SK-N-SH (cell line): ENCODE measurements at regions of chr9 and their contacts with region 1.

Region 1: DNA sequence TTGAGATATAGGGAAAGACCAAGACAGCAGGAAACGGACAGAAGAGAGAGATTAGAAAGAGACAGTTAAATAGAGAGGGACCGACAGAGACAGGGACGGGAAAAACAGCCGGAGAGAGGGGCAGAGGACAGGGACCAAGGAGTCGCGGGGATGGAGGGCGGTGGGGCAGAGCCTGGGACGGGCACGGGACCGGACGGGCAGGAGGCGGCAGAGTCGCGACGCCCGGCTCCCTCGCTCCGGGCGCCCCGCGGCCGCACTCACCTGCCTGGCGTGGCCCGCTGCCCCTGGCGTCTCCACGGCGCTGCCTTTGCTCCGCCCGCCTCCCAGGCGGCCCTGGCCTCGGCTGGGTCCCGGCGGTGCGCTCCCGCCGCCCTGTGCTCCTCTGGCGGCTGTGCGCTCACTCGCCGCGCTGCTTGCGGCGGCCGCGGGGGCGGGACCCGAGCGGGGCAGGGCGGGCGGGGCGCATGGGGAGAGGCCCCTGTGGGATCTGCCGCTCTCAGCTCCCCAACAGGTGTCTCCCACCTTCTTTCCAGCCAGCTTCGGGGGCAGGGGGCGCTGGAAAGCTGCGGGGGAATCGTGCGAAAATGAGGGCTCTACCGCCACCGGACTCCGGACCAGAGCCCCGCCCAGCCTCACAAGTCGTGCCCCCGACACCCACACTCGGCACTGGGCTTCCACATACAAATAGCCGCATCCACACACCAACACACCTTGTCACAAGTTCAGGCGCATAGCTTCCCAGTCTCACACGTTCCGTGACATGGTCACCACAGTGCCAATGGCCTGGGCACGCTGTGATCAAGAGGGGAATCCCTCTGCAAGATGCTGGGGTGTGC is at the start of gene ARID3C:
- DNase-seq: peak; percentile 84
- H3K4me3 ChIP-seq: peak within 1 kb of the TSS; percentile 44 to 52
- H3K27ac ChIP-seq: no peak within 1 kb of the TSS
- H3K4me1 ChIP-seq: peaks cover 0 to 8% of the 10 kb centered on the region in 2 experiments; a peak in 1 of 4 replicates
- H3K27me3 ChIP-seq: peaks cover 21% of the 10 kb centered on the region; the same call in 1 of the 2 replicates
- CTCF ChIP-seq: no peak
- EP300 ChIP-seq: no peak
- RAD21 ChIP-seq: no peak
- polyA plus RNA-seq, gene ARID3C: 0.08 and 0.11 TPM in 2 replicates

Region 2: GRCh38 chr9:34106110-34106509 is 522.8 kb before region 1 on chr9:
- CTCF ChIA-PET with region 1: no interaction called
- POLR2A ChIA-PET with region 1: no interaction called
- DNase-seq: no peak
- H3K4me3 ChIP-seq: no peak overlapping the region
- H3K27ac ChIP-seq: no peak overlapping the region
- H3K4me1 ChIP-seq: no peaks in the 10 kb centered on the region
- H3K27me3 ChIP-seq: no peaks in the 10 kb centered on the region
- CTCF ChIP-seq: no peak
- EP300 ChIP-seq: no peak
- RAD21 ChIP-seq: no peak

Region 3: DNA sequence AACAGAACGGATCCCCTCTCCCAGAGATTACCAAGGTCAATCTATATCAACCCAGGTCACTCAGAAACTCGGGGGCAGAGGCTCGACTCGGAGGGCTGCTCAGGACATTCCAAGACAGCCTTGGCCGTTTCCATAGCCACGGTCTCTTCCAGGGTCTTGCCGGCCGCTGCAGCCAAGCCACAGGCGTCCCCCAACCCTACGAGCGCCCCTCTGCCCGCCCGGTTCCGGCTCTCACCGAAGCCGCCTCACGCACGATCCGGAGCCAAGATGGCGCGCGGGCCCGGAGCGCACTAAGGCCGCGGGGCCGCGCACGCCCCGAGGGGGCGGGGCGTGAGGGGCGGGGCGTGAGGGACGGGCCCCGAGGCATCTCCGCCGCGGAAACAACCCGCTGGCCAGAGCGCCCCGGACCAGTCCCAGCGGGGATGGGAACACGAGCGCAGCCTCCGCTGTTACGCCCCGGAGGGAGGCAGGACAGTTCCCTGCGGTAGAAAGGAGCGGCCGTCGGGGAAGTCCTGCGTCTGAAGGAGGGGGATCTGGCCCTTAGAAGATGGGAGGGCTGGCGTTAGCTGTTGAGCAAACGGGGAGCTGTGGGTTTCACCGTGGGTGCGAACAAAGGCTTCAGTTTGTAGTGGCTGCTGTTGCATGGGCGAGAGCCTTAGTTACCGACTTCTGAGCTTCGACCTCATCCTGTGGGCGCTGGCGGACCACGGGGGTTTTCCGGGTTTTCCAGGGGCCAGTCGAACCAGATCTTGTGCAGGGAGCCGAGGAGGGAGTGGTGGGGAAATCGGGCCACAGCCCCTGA is 16.8 kb before region 1 on chr9 and contains the start of gene RPP25L:
- CTCF ChIA-PET with region 1: interaction called, 256 read pairs
- POLR2A ChIA-PET with region 1: no interaction called
- DNase-seq: peak; percentile 93
- H3K4me3 ChIP-seq: peak within 1 kb of the TSS; percentile 66 to 84
- H3K27ac ChIP-seq: peak within 1 kb of the TSS; percentile 73 to 75
- H3K4me1 ChIP-seq: peaks cover 0 to 36% of the 10 kb centered on the region in 2 experiments; a peak in 1 of 4 replicates
- H3K27me3 ChIP-seq: no peaks in the 10 kb centered on the region
- CTCF ChIP-seq: no peak
- EP300 ChIP-seq: no peak
- RAD21 ChIP-seq: no peak
- polyA plus RNA-seq, gene RPP25L: 46.3 and 47.6 TPM in 2 replicates